CD8-positive, alpha-beta T cell (primary cell): ENCODE measurements at regions of chr18 and their contacts with region 1.

Region 1: DNA sequence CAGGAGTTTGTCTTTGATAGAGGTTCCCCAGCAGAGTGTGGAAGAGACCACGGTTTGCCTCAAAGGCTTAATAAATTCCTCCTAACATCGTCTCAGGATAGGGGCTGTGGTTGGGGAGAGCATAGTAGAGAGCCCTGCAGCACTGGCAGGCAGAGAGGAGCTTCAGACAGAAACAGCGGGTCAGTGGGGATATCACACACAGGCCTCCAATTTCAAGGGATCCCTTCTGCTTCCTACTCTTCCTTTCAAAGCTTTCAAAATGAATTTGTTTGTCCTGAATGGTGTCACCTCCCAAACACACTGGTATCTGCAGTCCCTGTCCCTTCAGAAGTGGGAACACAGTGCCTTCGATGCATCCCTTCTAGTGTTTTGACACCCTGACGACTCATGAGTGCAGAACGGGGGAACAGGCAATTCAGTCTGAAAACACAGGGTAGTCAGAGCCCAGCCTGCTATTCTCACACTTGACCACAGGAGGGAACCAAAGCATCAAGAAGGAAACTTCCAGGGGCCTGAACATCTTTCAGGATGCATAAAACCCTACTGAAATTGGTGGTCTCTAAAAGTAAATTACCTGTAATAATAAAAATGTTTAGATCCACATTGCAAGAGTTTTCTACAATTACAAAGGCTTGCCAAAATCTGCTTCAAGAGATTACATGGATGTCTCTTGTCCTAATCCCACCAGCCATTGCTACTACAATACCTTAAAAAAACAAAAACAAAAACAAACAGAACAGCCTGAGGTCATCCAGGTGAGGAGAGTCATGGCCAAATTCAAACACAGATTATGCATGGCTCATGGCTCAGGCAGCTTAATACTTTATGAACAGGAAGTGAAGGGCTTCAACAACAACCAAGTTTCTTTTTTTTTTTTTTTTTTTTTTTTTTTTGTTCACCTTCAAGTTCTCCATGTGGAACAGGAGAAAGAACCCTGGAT is 49.8 kb downstream of the SLC14A2 start:
- DNase-seq: peak; percentile 37 to 83 (median 70)
- ATAC-seq: peak; percentile 83
- H3K4me3 ChIP-seq: no peak overlapping the region
- H3K4me3 Mint-ChIP-seq: peak overlapping the region; percentile 50
- H3K27ac ChIP-seq: peak overlapping the region in 1 of 2 experiments; percentile 46
- H3K27ac Mint-ChIP-seq: peak overlapping the region; percentile 74
- H3K4me1 ChIP-seq: peaks cover 51% of the 10 kb centered on the region
- H3K4me1 Mint-ChIP-seq: peaks cover 56% of the 10 kb centered on the region
- H3K27me3 ChIP-seq: no peaks in the 10 kb centered on the region
- H3K27me3 Mint-ChIP-seq: no peaks in the 10 kb centered on the region
- CTCF ChIP-seq: peak; percentile 92

Region 2: DNA sequence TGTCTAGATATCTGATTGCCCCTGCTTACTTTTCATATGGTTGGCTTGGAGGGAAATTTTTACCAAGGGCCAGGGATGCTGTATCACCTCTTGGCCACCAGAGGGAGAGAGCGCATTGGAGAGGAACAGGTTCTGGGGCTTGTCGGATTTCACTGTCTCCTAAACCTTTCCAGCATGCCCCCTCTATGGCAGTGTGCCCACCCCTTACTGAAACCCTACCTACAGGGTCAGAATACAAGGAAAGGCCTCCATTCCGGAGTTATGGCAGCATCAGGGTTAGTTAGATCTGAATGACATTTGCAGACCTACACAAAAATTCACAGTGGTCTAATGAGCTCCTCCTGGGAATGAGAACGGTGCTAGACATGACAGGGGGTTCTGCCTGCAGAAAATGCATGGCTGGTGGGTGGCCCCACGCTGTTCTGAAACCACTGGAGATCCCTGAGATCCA is 44.0 kb before region 1 on chr18:
- CTCF ChIA-PET with region 1: interaction called, 17 read pairs
- POLR2A ChIA-PET with region 1: no interaction called
- intact Hi-C with region 1: no loop called
- DNase-seq: peak in 7 of 9 experiments; percentile 10 to 66 (median 39)
- ATAC-seq: peak; percentile 56
- H3K4me3 ChIP-seq: no peak overlapping the region
- H3K4me3 Mint-ChIP-seq: no peak overlapping the region
- H3K27ac ChIP-seq: no peak overlapping the region
- H3K27ac Mint-ChIP-seq: no peak overlapping the region
- H3K4me1 ChIP-seq: no peaks in the 10 kb centered on the region
- H3K4me1 Mint-ChIP-seq: no peaks in the 10 kb centered on the region
- H3K27me3 ChIP-seq: no peaks in the 10 kb centered on the region
- H3K27me3 Mint-ChIP-seq: peaks cover 16% of the 10 kb centered on the region
- CTCF ChIP-seq: peak; percentile 92

Region 3: DNA sequence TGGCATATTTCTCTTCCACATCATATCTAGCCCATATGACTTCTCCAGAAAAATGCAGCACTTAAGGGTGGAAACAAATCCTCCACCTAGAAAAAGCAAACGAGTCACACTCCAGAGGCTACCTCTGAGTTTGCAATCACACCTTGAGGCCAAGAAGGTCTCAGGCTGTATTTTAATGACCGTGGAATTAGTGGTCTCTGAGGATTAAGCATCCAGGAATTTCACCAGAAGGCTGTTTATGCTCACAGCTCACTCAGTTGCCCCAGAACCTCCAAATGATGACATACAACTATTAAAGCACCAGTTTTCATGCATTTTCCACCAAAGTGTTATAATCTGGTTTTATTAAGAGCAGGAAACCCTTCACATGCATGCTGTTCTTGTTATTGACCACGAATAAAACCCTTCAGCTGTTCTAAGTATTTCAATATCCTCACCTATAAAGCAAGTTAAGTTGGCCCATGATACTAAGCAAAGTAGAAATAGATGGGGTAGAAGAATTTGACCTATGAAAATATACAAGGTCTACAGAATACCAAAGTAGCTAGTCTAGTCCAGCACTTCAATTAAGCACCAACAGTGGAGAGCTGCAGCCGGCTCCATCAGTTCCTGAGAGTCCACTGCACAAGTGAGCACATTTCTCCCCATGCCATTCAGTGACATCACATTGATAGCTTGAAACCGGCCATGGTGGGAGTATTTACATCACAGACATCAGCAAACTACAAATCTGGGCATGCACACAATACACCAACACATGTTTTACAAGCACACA is 19.4 kb after region 1 on chr18:
- CTCF ChIA-PET with region 1: interaction called, 209 read pairs
- POLR2A ChIA-PET with region 1: interaction called, 53 read pairs
- intact Hi-C with region 1: loop called (anchors 1 kb)
- DNase-seq: no peak
- ATAC-seq: no peak
- H3K4me3 ChIP-seq: no peak overlapping the region
- H3K4me3 Mint-ChIP-seq: no peak overlapping the region
- H3K27ac ChIP-seq: no peak overlapping the region
- H3K27ac Mint-ChIP-seq: no peak overlapping the region
- H3K4me1 ChIP-seq: peaks cover 57% of the 10 kb centered on the region
- H3K4me1 Mint-ChIP-seq: peaks cover 51% of the 10 kb centered on the region
- H3K27me3 ChIP-seq: no peaks in the 10 kb centered on the region
- H3K27me3 Mint-ChIP-seq: no peaks in the 10 kb centered on the region
- CTCF ChIP-seq: no peak

Region 4: DNA sequence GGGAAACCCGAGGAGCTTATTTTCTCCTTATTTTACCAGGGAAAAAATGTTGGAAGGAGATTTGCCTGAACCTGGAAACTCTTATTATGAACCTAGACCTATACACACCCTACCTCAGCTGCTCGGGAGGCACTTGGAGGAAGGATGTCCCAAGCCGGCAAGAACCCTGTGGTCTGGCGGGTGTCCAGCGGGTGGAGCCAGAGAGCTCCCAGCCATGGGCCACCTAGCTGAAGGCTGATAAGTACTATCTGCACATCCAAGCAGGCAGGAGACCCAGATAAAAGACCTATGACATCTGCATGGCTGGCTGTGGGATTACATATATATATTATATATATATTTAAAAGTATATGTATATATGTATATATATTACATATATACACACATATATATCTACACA is 57.8 kb after region 1 on chr18:
- CTCF ChIA-PET with region 1: interaction called, 23 read pairs
- POLR2A ChIA-PET with region 1: interaction called, 3 read pairs
- intact Hi-C with region 1: loop called (anchors 2 kb)
- DNase-seq: peak; percentile 33 to 77 (median 58)
- ATAC-seq: peak; percentile 73
- H3K4me3 ChIP-seq: no peak overlapping the region
- H3K4me3 Mint-ChIP-seq: no peak overlapping the region
- H3K27ac ChIP-seq: no peak overlapping the region
- H3K27ac Mint-ChIP-seq: no peak overlapping the region
- H3K4me1 ChIP-seq: no peaks in the 10 kb centered on the region
- H3K4me1 Mint-ChIP-seq: no peaks in the 10 kb centered on the region
- H3K27me3 ChIP-seq: no peaks in the 10 kb centered on the region
- H3K27me3 Mint-ChIP-seq: peaks cover 2% of the 10 kb centered on the region
- CTCF ChIP-seq: peak; percentile 67

Region 5: DNA sequence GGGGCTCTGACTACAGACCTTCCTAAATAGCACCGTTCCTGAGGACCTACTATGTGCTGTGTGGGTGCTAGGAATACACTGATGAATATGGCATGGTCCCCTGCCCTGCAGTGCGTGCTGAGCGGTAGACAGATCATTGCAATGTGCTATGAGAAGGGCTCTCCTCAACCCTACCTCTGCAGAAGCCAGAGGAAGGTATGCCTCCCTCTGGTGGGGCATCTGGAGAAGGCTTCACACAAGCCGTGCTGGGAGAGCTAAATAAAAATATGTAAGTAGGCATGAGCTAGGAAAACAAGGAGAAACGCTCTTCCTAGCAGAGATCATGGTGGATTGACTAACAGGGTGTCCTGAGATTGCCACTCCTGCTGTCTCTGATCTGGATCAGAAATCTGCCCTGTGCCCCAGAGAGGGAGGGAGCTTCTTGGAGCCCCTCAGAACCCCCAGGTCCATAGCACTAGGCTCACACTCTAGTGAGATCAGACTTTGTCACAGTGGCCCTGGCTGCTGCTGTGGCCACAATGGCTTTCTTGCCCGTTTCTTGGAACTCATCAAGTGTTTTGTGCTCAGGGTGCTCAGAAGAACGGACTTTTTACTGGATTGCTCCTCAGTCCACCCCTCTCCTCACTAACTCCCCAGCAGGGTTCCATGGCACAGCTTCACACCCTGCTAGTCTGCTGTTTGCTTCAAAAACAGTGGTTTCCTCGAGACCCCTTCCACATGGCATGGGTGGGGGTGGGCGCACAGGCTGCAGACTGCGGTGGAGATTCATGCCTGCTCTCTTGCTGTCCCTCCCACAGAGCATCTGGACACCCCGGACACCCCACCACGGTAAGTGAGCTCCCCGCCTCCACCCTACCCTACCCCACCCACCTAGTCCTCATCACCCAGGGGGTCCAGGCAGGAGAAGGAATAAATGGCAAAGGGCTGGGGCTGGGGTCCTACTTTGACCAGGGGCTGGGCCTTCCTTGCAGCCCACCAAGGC is 174.6 kb after region 1 on chr18:
- CTCF ChIA-PET with region 1: interaction called, 5 read pairs
- POLR2A ChIA-PET with region 1: interaction called, 5 read pairs
- intact Hi-C with region 1: loop called (anchors 1 kb)
- DNase-seq: peak in 3 of 9 experiments; percentile 49 to 56 (median 50)
- ATAC-seq: peak; percentile 72
- H3K4me3 ChIP-seq: no peak overlapping the region
- H3K4me3 Mint-ChIP-seq: no peak overlapping the region
- H3K27ac ChIP-seq: no peak overlapping the region
- H3K27ac Mint-ChIP-seq: no peak overlapping the region
- H3K4me1 ChIP-seq: peaks cover 8% of the 10 kb centered on the region
- H3K4me1 Mint-ChIP-seq: peaks cover 17% of the 10 kb centered on the region
- H3K27me3 ChIP-seq: peaks cover 0 to 11% of the 10 kb centered on the region in 2 experiments
- H3K27me3 Mint-ChIP-seq: peaks cover 36% of the 10 kb centered on the region
- CTCF ChIP-seq: no peak

Region 6: DNA sequence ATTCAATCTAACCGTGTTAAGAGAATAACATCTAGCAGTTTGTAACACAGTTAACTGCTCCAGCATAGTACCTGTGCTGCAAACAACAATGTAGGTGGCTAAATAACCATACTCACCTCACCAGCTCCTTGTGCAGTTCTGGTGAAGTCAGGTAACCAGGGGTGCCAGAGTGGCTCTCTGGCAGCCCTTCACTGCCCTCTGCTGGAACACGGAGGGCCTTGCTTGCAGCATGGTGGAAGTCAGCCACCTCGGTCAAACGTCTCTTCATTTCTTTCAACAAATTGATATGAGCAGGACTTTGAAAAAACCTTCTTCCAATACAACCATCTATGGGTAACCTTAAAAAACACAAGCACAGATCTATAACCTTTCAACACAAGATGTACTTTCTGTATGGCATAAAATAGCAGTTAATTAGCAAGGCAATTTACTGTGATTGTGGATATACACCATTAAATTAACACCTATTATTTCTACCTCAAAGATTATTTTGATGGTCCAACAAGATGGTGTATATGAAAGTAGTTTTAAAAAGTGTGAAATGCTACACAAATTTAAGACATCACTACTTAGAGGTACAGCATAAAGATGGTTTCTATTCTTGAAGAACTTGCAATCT is 245.4 kb after region 1 on chr18:
- CTCF ChIA-PET with region 1: interaction called, 17 read pairs
- POLR2A ChIA-PET with region 1: no interaction called
- intact Hi-C with region 1: loop called (anchors 1 kb)
- DNase-seq: peak; percentile 35 to 73 (median 63)
- ATAC-seq: peak; percentile 84
- H3K4me3 ChIP-seq: no peak overlapping the region
- H3K4me3 Mint-ChIP-seq: no peak overlapping the region
- H3K27ac ChIP-seq: no peak overlapping the region
- H3K27ac Mint-ChIP-seq: no peak overlapping the region
- H3K4me1 ChIP-seq: no peaks in the 10 kb centered on the region
- H3K4me1 Mint-ChIP-seq: no peaks in the 10 kb centered on the region
- H3K27me3 ChIP-seq: no peaks in the 10 kb centered on the region
- H3K27me3 Mint-ChIP-seq: no peaks in the 10 kb centered on the region
- CTCF ChIP-seq: peak; percentile 71